AG04449 (cell line): ENCODE measurements at regions of chr2 and their contacts with region 1.

Region 1: GRCh38 chr2:68751397-68752339 is 17.1 kb downstream of the ARHGAP25 start:
- DNase-seq: peak; percentile 31
- H3K4me3 ChIP-seq: no peak overlapping the region
- CTCF ChIP-seq: peak; percentile 94

Region 2: GRCh38 chr2:68103030-68103708 is 648.5 kb before region 1 on chr2:
- CTCF ChIA-PET with region 1: no interaction called
- POLR2A ChIA-PET with region 1: no interaction called
- DNase-seq: no peak
- H3K4me3 ChIP-seq: no peak overlapping the region
- CTCF ChIP-seq: no peak

Region 3: GRCh38 chr2:68715353-68716041 is 36.2 kb before region 1 on chr2:
- CTCF ChIA-PET with region 1: interaction called, 13 read pairs
- POLR2A ChIA-PET with region 1: no interaction called
- DNase-seq: no peak
- H3K4me3 ChIP-seq: no peak overlapping the region
- CTCF ChIP-seq: peak; percentile 75

Region 4: DNA sequence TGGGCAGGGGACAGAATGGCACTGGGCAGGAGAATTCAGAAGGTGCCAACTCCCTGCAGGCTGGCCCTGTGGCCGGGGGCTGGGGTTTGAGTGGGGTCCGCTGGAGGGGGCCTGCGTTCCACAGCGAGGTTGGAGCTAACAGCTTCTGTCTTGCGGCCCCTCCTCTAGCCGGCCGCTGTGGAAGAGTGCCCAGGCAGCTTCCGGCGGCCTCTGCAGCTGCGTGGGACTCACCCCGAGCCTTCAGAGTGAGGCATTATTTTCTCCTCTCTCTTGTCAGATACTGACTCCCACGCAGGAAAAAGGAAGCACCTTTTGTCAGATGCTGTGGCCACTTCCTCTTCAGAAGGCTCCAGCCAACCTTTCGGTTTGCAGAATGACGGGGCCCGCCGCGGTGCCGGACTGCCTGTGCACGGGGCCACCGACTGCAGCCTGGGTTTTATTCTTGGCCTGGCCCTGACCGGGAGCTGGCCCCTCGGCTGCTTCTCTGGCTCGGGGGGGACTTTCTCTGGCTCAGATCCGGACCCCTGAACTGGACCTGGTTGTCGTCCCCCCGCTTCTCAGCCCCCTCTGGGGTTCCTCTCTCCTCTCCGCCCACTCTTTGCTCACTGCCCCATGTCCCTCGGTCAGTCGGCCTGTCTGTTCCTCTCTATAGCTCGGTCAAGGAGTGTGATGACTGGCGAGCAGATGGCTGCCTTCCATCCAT is 23.1 kb after region 1 on chr2:
- CTCF ChIA-PET with region 1: interaction called, 15 read pairs
- POLR2A ChIA-PET with region 1: no interaction called
- DNase-seq: no peak
- H3K4me3 ChIP-seq: no peak overlapping the region
- CTCF ChIP-seq: no peak

Region 5: GRCh38 chr2:68837164-68837860 is 85.6 kb after region 1 on chr2:
- CTCF ChIA-PET with region 1: interaction called, 63 read pairs
- POLR2A ChIA-PET with region 1: no interaction called
- DNase-seq: no peak
- H3K4me3 ChIP-seq: no peak overlapping the region
- CTCF ChIP-seq: peak; percentile 72

Region 6: GRCh38 chr2:68909793-68910674 is 158.4 kb after region 1 on chr2:
- CTCF ChIA-PET with region 1: interaction called, 151 read pairs
- POLR2A ChIA-PET with region 1: no interaction called
- DNase-seq: no peak
- H3K4me3 ChIP-seq: no peak overlapping the region
- CTCF ChIP-seq: peak; percentile 80